Activated B cell treated with CpG ODN at 0.5 μM for 24 hours (primary cell): ENCODE measurements at regions of chr9 and their contacts with region 1.

Region 1: GRCh38 chr9:33167046-33167808 is at the start of gene B4GALT1:
- DNase-seq: peak; percentile 95
- ATAC-seq: peak; percentile 74
- H3K4me3 Mint-ChIP-seq: peak within 1 kb of the TSS; percentile 97
- H3K27ac Mint-ChIP-seq: peak within 1 kb of the TSS; percentile 98
- H3K4me1 Mint-ChIP-seq: peaks cover 63% of the 10 kb centered on the region
- H3K27me3 Mint-ChIP-seq: no peaks in the 10 kb centered on the region
- CTCF ChIP-seq: no peak
- total RNA-seq, gene B4GALT1: 111 and 118 TPM in 2 replicates

Region 2: GRCh38 chr9:33024966-33025571 is 142.2 kb before region 1 on chr9 and contains the start of gene DNAJA1:
- CTCF ChIA-PET with region 1: no interaction called
- POLR2A ChIA-PET with region 1: interaction called, 6 read pairs
- intact Hi-C with region 1: loop called (anchors 1 kb)
- DNase-seq: peak; percentile 98
- ATAC-seq: peak; percentile 84
- H3K4me3 Mint-ChIP-seq: peak within 1 kb of the TSS; percentile 95
- H3K27ac Mint-ChIP-seq: peak within 1 kb of the TSS; percentile 88
- H3K4me1 Mint-ChIP-seq: peaks cover 63% of the 10 kb centered on the region
- H3K27me3 Mint-ChIP-seq: no peaks in the 10 kb centered on the region
- CTCF ChIP-seq: no peak
- total RNA-seq, gene DNAJA1: 107 and 117 TPM in 2 replicates

Region 3: DNA sequence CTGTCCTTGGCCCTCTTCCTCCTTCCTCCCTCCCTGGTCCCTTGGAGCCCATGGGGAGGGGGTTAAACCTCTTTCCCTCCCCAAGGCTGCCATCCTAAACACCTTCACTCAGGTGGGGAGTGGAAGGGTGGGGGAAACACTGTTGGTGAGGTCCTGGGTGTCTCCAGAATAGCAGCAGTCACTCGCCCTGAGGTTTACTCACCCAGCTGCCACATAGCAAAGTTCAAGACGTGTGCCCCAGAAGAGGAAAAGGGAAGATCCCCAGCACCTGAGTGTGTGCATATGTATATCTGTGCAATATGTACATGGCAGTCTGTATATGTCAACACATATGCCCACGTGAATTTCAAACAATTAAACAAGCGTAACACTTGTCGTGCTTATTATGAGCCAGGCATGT is 59.5 kb before region 1 on chr9:
- CTCF ChIA-PET with region 1: interaction called, 5 read pairs
- POLR2A ChIA-PET with region 1: interaction called, 12 read pairs
- intact Hi-C with region 1: no loop called
- DNase-seq: no peak
- ATAC-seq: no peak
- H3K4me3 Mint-ChIP-seq: no peak overlapping the region
- H3K27ac Mint-ChIP-seq: peak overlapping the region; percentile 59
- H3K4me1 Mint-ChIP-seq: peaks cover 49% of the 10 kb centered on the region
- H3K27me3 Mint-ChIP-seq: no peaks in the 10 kb centered on the region
- CTCF ChIP-seq: no peak

Region 4: GRCh38 chr9:33130508-33130911 is 36.7 kb before region 1 on chr9:
- CTCF ChIA-PET with region 1: interaction called, 12 read pairs
- POLR2A ChIA-PET with region 1: interaction called, 593 read pairs
- intact Hi-C with region 1: loop called (anchors 1 kb)
- DNase-seq: peak; percentile 22
- ATAC-seq: peak; percentile 58
- H3K4me3 Mint-ChIP-seq: peak overlapping the region; percentile 70
- H3K27ac Mint-ChIP-seq: peak overlapping the region; percentile 96
- H3K4me1 Mint-ChIP-seq: peaks cover 95% of the 10 kb centered on the region
- H3K27me3 Mint-ChIP-seq: no peaks in the 10 kb centered on the region
- CTCF ChIP-seq: no peak

Region 5: DNA sequence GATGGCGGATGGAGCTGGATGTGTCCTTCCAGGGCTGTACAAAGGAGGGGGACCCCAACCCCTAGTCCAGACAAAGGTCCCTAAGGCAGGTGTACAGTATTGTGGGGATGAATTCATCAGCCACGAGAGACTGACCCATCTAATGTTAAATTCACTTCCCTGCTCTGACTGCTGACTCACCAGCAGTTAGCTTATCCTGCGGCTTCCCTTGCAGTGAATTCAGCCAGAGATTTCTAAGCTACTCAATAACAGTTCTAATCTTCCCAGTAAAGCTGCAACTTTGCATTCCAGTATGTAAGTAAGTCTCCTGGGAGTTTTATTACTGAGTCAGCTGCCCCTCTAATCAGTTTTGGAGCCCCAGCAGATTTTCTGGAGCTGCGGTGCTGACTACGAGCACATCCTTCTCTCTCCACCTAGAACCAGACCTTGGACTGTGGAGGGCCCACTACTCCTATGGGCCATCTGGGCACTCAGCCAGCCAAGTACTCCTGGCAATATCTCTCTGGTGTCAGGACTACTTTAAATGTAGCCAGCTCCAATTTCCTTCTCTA is 16.1 kb before region 1 on chr9:
- CTCF ChIA-PET with region 1: interaction called, 6 read pairs
- POLR2A ChIA-PET with region 1: interaction called, 593 read pairs
- intact Hi-C with region 1: loop called (anchors 1 kb)
- DNase-seq: no peak
- ATAC-seq: peak; percentile 30
- H3K4me3 Mint-ChIP-seq: peak overlapping the region; percentile 33
- H3K27ac Mint-ChIP-seq: peak overlapping the region; percentile 84
- H3K4me1 Mint-ChIP-seq: peaks cover 91% of the 10 kb centered on the region
- H3K27me3 Mint-ChIP-seq: no peaks in the 10 kb centered on the region
- CTCF ChIP-seq: no peak

Region 6: GRCh38 chr9:33225319-33226149 is 58.3 kb after region 1 on chr9:
- CTCF ChIA-PET with region 1: interaction called, 25 read pairs
- POLR2A ChIA-PET with region 1: interaction called, 28 read pairs
- intact Hi-C with region 1: loop called (anchors 1 kb)
- DNase-seq: no peak
- ATAC-seq: peak; percentile 33
- H3K4me3 Mint-ChIP-seq: no peak overlapping the region
- H3K27ac Mint-ChIP-seq: peak overlapping the region; percentile 4
- H3K4me1 Mint-ChIP-seq: peaks cover 51% of the 10 kb centered on the region
- H3K27me3 Mint-ChIP-seq: no peaks in the 10 kb centered on the region
- CTCF ChIP-seq: no peak

Region 7: DNA sequence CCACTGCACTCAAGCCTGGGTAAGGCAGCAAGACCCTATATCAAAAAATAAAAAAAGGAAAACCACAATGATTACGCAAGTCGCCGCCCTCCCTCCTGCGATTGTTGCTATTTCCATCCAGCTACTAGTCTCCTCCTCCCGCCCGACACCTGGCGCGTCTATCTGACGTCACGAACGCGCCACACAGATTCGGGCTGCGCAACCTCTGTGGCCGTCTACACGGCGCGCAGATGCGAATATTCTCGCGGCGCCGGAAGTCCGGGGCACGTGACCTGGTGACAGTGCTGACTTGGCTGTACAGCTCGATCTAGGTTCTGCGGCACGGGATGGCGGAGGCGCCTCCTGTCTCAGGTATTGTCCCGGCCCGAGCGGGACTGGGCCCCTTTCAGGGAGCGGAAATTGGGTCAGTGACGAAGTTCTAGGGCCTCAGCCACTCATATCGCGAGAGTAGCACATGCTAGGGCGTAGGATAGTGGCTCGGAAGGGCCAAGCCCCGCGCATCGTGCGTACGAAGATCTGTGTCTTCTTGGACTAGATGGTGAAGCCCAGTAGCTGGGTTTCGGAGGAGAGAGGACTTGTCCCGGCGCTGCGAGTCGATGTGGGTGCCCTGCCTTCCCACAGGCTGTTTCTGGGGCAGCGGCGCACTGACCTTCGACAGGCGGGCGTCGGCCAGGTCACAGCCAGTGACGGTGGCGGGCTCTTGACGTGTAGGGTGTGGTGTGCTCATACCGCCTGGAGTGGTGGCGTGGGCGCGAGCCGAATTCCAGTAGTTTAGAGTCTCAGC is 123.2 kb after region 1 on chr9 and contains the start of gene NFX1:
- CTCF ChIA-PET with region 1: no interaction called
- POLR2A ChIA-PET with region 1: interaction called, 15 read pairs
- intact Hi-C with region 1: loop called (anchors 2 kb)
- DNase-seq: peak; percentile 97
- ATAC-seq: peak; percentile 80
- H3K4me3 Mint-ChIP-seq: peak within 1 kb of the TSS; percentile 99
- H3K27ac Mint-ChIP-seq: peak within 1 kb of the TSS; percentile 100
- H3K4me1 Mint-ChIP-seq: peaks cover 62% of the 10 kb centered on the region
- H3K27me3 Mint-ChIP-seq: no peaks in the 10 kb centered on the region
- CTCF ChIP-seq: no peak
- total RNA-seq, gene NFX1: 51.0 and 57.2 TPM in 2 replicates